ENCODE measurements at regions of chr2 and their contacts with region 1.

Region 1: DNA sequence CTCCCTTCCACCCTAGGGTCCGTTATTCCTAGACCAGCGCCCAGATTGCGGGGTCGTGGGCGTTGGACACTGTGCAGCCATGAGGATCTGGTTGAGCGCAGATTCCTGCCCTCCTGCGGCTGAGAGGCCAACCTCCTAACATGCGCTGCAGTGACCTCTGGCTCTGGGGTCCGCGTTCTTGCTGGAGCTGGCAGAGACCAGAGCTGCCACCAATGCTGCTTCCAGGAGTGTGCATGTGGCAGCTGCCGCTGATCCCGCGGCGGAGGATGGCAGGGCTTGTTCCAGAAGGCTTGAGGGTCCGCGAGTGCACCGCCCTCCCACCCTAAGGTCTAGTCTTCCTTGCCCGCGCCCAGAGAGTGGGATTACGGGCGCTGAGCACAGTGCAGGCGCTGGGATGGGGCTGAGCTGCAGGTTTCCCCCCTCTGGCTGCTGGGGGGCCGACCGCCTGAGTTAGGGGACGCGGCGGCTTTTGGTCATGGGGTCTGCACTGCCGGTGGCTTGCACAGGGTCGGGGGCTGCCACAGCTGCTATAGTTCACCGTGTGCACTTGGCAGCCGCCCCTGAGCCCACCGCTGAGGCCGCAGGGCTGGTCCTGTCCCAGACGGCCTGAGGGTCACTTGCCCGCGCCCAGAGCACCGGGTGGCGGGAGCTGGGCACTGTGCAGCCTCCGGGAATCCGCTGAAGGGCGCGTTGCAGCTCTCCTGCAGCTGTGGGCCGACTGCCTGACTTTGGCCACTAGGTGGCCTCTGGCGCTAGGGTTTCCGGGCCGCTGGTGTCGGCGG is 145.9 kb downstream of the CCDC74A start:
- DNase-seq: peak; percentile 81
- ATAC-seq: peak; percentile 88
- H3K4me3 Mint-ChIP-seq: no peak overlapping the region
- H3K27ac Mint-ChIP-seq: no peak overlapping the region
- H3K4me1 Mint-ChIP-seq: peaks cover 4% of the 10 kb centered on the region
- H3K27me3 Mint-ChIP-seq: peaks cover 33% of the 10 kb centered on the region

Region 2: DNA sequence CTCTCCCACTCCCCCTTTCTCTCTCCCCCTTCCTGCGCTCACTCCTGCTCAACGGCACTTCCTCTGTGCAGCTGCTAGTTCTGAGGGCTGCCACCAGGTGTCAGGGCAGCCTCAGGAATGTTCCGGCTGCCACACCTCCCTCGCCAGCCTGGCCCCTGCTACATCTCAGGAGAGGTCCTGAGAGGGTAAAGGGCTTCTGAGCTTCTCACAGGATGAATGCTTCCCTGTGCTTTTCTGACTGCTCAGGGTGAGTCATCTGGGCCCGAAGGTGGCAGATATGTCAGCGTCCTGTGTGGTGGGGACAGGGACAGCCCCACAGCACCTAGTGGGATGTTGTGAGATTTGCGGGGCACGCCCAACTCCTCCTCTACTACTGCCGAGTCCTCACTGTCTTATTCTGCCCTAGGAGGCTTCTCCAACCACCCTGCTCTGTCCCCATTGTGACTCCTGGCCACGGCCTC is 519.5 kb before region 1 on chr2:
- CTCF ChIA-PET with region 1: interaction called, 21 read pairs
- DNase-seq: peak; percentile 87
- ATAC-seq: peak; percentile 92
- H3K4me3 Mint-ChIP-seq: no peak overlapping the region
- H3K27ac Mint-ChIP-seq: peak overlapping the region; percentile 2
- H3K4me1 Mint-ChIP-seq: peaks cover 29% of the 10 kb centered on the region
- H3K27me3 Mint-ChIP-seq: no peaks in the 10 kb centered on the region

Region 3: GRCh38 chr2:131413148-131413747 is 260.3 kb before region 1 on chr2:
- CTCF ChIA-PET with region 1: interaction called, 53 read pairs
- DNase-seq: no peak
- ATAC-seq: peak; percentile 57
- H3K4me3 Mint-ChIP-seq: no peak overlapping the region
- H3K27ac Mint-ChIP-seq: no peak overlapping the region
- H3K4me1 Mint-ChIP-seq: peaks cover 9% of the 10 kb centered on the region
- H3K27me3 Mint-ChIP-seq: peaks cover 55% of the 10 kb centered on the region

Region 4: GRCh38 chr2:131492418-131493198 is 181.0 kb before region 1 on chr2:
- CTCF ChIA-PET with region 1: interaction called, 10 read pairs
- DNase-seq: peak; percentile 97
- ATAC-seq: peak; percentile 82
- H3K4me3 Mint-ChIP-seq: peak overlapping the region; percentile 96
- H3K27ac Mint-ChIP-seq: peak overlapping the region; percentile 98
- H3K4me1 Mint-ChIP-seq: peaks cover 48% of the 10 kb centered on the region
- H3K27me3 Mint-ChIP-seq: no peaks in the 10 kb centered on the region

Region 5: DNA sequence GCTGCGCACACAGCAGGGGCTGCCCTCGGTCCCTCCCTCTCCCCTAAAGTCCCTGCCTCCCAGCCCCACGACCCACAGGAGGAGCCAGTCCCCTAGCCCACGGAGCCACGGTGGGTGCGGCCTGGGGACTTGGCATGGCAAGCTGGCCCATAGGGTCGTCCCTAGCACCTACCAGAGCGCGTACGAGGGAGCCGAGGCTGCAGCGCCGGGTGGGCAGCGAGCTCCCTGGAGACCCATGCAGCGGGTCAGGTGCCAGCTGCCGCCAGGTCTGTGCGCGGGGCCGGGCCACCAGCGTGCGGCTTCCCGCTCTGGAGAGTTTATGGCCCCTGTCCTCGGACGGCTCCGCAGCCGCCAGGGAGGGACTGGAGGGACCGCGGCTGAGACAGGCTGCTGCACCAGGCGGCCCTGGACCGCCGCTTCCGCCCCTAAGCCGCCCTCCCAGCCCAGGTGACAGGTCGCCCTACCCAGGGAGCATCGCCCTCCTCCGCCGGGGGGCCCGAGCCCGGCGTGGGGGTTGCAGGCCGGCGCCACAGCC is 127.7 kb after region 1 on chr2:
- CTCF ChIA-PET with region 1: interaction called, 29 read pairs
- DNase-seq: no peak
- ATAC-seq: no peak
- H3K4me3 Mint-ChIP-seq: no peak overlapping the region
- H3K27ac Mint-ChIP-seq: no peak overlapping the region
- H3K4me1 Mint-ChIP-seq: peaks cover 8% of the 10 kb centered on the region
- H3K27me3 Mint-ChIP-seq: peaks cover 14% of the 10 kb centered on the region

Measured in activated CD8-positive, alpha-beta memory T cell treated with anti-CD3 and anti-CD28 coated beads, Interleukin-2, amount 10 ng/mL, durations not matched to agents 7 days and 5 days (primary cell).